CD8-positive, alpha-beta T cell (primary cell): ENCODE measurements at regions of chr16 and their contacts with region 1.

Region 1: GRCh38 chr16:48244080-48244862 is at the start of gene LONP2:
- DNase-seq: peak; percentile 82 to 93 (median 89)
- ATAC-seq: peak; percentile 94
- H3K4me3 ChIP-seq: peak within 1 kb of the TSS; percentile 66 to 88
- H3K4me3 Mint-ChIP-seq: peak within 1 kb of the TSS; percentile 90
- H3K27ac ChIP-seq: peak within 1 kb of the TSS; percentile 75 to 83
- H3K27ac Mint-ChIP-seq: peak within 1 kb of the TSS; percentile 95
- H3K4me1 ChIP-seq: peaks cover 38% of the 10 kb centered on the region
- H3K4me1 Mint-ChIP-seq: peaks cover 50% of the 10 kb centered on the region
- H3K27me3 ChIP-seq: no peaks in the 10 kb centered on the region
- H3K27me3 Mint-ChIP-seq: no peaks in the 10 kb centered on the region
- CTCF ChIP-seq: no peak
- total RNA-seq, gene LONP2: 71.8 to 72.1 TPM

Region 2: DNA sequence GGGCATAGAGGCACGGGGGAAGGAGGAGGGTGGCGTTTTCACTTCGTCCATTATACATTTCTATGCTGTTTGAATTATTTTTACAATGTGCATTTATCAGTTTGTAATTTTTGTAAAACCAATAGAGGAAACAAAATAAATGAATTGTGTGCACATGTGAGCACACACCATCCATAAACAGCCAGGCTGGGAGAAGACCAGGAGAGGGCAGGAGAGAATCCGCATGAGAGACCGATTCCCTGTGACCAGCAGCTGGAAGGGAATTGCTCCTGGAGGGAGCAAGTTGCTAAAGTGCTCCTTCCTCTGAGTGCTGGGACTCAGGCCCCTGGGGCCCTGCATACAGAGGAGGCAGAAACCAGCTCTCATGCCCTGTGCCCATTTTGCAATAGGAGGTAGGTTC is 214.5 kb before region 1 on chr16:
- CTCF ChIA-PET with region 1: no interaction called
- POLR2A ChIA-PET with region 1: no interaction called
- intact Hi-C with region 1: no loop called
- DNase-seq: no peak
- ATAC-seq: no peak
- H3K4me3 ChIP-seq: no peak overlapping the region
- H3K4me3 Mint-ChIP-seq: no peak overlapping the region
- H3K27ac ChIP-seq: no peak overlapping the region
- H3K27ac Mint-ChIP-seq: no peak overlapping the region
- H3K4me1 ChIP-seq: no peaks in the 10 kb centered on the region
- H3K4me1 Mint-ChIP-seq: no peaks in the 10 kb centered on the region
- H3K27me3 ChIP-seq: no peaks in the 10 kb centered on the region
- H3K27me3 Mint-ChIP-seq: no peaks in the 10 kb centered on the region
- CTCF ChIP-seq: no peak

Region 3: GRCh38 chr16:48206594-48207242 is 37.6 kb before region 1 on chr16:
- CTCF ChIA-PET with region 1: no interaction called
- POLR2A ChIA-PET with region 1: no interaction called
- intact Hi-C with region 1: no loop called
- DNase-seq: no peak
- ATAC-seq: no peak
- H3K4me3 ChIP-seq: no peak overlapping the region
- H3K4me3 Mint-ChIP-seq: no peak overlapping the region
- H3K27ac ChIP-seq: no peak overlapping the region
- H3K27ac Mint-ChIP-seq: no peak overlapping the region
- H3K4me1 ChIP-seq: no peaks in the 10 kb centered on the region
- H3K4me1 Mint-ChIP-seq: no peaks in the 10 kb centered on the region
- H3K27me3 ChIP-seq: peaks cover 0 to 2% of the 10 kb centered on the region in 2 experiments
- H3K27me3 Mint-ChIP-seq: peaks cover 14% of the 10 kb centered on the region
- CTCF ChIP-seq: no peak

Region 4: DNA sequence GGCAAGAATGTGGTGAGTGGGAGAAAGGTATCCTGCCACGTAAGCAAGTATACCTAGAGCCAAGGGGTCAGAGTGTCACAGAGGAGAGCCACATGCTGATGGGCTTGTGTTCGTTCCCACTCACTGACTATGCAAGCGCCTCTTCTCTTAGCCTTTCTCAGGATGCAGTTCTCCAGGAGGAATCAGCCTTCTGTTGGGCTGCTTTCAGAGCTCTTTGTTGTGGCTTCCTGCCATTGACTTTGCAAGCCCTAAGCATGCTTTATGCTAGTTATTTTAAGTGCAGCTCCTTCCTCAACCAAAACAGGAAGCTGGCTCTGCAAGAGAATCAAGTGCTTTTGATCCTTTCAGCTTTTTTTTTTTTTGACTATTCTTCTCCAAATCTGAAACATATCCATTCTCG is 74.4 kb after region 1 on chr16:
- CTCF ChIA-PET with region 1: no interaction called
- POLR2A ChIA-PET with region 1: interaction called, 4 read pairs
- intact Hi-C with region 1: loop called (anchors 5 kb)
- DNase-seq: peak in 8 of 9 experiments; percentile 7 to 73 (median 36)
- ATAC-seq: peak; percentile 87
- H3K4me3 ChIP-seq: no peak overlapping the region
- H3K4me3 Mint-ChIP-seq: peak overlapping the region; percentile 62
- H3K27ac ChIP-seq: peak overlapping the region in 1 of 2 experiments; percentile 51
- H3K27ac Mint-ChIP-seq: peak overlapping the region; percentile 79
- H3K4me1 ChIP-seq: peaks cover 32% of the 10 kb centered on the region
- H3K4me1 Mint-ChIP-seq: peaks cover 54% of the 10 kb centered on the region
- H3K27me3 ChIP-seq: no peaks in the 10 kb centered on the region
- H3K27me3 Mint-ChIP-seq: no peaks in the 10 kb centered on the region
- CTCF ChIP-seq: no peak

Region 5: GRCh38 chr16:48365581-48366164 is 121.4 kb after region 1 on chr16:
- CTCF ChIA-PET with region 1: no interaction called
- POLR2A ChIA-PET with region 1: no interaction called
- intact Hi-C with region 1: loop called in 1 of 2 experiments (anchors 5 kb)
- DNase-seq: peak; percentile 48 to 83 (median 69)
- ATAC-seq: peak; percentile 85
- H3K4me3 ChIP-seq: peak overlapping the region; percentile 65 to 83
- H3K4me3 Mint-ChIP-seq: peak overlapping the region; percentile 89
- H3K27ac ChIP-seq: peak overlapping the region; percentile 63 to 89
- H3K27ac Mint-ChIP-seq: peak overlapping the region; percentile 97
- H3K4me1 ChIP-seq: peaks cover 25% of the 10 kb centered on the region
- H3K4me1 Mint-ChIP-seq: peaks cover 40% of the 10 kb centered on the region
- H3K27me3 ChIP-seq: no peaks in the 10 kb centered on the region
- H3K27me3 Mint-ChIP-seq: no peaks in the 10 kb centered on the region
- CTCF ChIP-seq: no peak